GM23248 (cell line): ENCODE measurements at regions of chr13 and their contacts with region 1.

Region 1: DNA sequence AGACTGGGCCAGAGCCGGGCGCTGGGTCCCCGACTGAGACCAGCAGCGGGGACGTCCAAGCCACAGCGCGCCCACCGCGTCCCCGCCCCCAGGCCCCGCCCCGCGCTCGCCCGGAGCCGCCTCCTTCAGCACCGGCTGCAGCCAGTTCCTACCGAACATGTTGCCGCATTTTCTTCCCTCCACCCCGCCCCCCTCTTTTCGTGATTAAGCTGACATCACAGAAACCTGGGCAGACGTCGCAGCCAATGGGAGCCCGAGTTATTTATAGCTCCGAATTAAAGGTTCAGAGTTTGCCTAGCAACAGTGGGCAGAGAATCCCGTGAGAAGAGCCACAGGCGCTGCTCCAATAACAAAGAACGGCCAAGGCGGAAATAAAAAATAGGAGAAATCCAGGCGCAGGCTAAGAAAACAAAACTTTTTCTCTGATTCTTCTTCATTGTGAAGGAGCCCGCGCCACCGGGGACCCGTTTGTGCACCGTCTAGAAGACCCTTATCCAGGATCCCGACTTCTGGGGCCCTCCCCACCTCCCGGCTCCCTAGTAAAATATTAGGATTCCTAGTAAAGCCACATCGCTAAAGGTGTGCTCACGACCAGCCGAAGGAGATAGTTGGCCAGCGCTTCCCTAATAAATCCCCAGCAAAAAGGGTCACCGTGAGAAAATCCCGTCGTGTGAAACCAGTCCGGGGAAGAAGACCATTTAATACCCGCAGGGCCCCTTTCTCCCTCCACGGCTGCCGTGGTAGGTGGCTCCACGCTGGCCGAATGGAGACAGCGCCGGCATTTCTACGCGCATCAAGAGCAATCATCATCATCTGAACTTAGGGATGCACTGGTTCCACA is 61.7 kb downstream of the SERP2 start:
- DNase-seq: peak; percentile 98
- H3K4me3 ChIP-seq: peak overlapping the region; percentile 82
- H3K27ac ChIP-seq: peak overlapping the region; percentile 87
- H3K4me1 ChIP-seq: peaks cover 19% of the 10 kb centered on the region
- H3K27me3 ChIP-seq: no peaks in the 10 kb centered on the region

Region 2: GRCh38 chr13:43905435-43906031 is 529.8 kb before region 1 on chr13:
- in situ Hi-C with region 1: loop called (anchors 10 kb)
- DNase-seq: peak; percentile 81
- H3K4me3 ChIP-seq: no peak overlapping the region
- H3K27ac ChIP-seq: no peak overlapping the region
- H3K4me1 ChIP-seq: peaks cover 8% of the 10 kb centered on the region; the same call in 1 of the 2 replicates
- H3K27me3 ChIP-seq: no peaks in the 10 kb centered on the region

Region 3: GRCh38 chr13:44050450-44051063 is 384.8 kb before region 1 on chr13:
- in situ Hi-C with region 1: loop called (anchors 10 kb)
- DNase-seq: peak; percentile 62
- H3K4me3 ChIP-seq: no peak overlapping the region
- H3K27ac ChIP-seq: no peak overlapping the region
- H3K4me1 ChIP-seq: no peaks in the 10 kb centered on the region
- H3K27me3 ChIP-seq: peaks cover 37% of the 10 kb centered on the region

Region 4: DNA sequence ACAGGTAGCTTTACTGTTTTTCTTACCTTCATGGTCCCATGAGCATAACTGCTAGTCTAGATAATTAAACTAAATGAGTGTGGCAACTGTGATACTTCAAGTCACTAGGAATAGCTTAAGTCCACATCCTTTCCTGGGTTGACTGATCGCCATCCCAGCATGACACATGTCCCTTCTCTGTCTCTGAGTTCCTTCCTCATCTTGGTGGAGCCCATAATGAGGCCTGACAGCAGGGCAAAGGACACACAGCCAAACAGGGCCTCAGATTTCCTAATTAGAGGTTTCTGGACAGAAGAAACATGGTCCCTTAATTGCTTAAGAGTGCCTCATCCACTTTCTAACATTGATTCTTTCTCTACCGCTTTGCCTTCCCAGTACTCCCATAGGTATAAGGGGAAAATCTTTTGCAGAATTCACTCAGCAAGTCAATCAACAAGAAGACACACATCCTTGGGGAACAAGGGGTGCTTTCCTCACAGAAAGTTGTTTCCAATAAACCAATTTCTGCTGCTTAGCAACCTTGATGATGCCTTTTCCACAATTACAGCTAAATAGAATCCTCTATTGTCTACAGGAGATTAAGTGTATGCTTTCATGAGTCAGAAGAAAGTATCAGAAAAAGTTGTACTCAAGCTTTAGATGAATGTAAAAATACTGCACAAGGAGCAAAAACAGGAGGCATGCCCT is 270.0 kb before region 1 on chr13:
- in situ Hi-C with region 1: no loop called
- DNase-seq: no peak
- H3K4me3 ChIP-seq: no peak overlapping the region
- H3K27ac ChIP-seq: no peak overlapping the region
- H3K4me1 ChIP-seq: no peaks in the 10 kb centered on the region
- H3K27me3 ChIP-seq: peaks cover 16% of the 10 kb centered on the region; the same call in 1 of the 2 replicates

Region 5: DNA sequence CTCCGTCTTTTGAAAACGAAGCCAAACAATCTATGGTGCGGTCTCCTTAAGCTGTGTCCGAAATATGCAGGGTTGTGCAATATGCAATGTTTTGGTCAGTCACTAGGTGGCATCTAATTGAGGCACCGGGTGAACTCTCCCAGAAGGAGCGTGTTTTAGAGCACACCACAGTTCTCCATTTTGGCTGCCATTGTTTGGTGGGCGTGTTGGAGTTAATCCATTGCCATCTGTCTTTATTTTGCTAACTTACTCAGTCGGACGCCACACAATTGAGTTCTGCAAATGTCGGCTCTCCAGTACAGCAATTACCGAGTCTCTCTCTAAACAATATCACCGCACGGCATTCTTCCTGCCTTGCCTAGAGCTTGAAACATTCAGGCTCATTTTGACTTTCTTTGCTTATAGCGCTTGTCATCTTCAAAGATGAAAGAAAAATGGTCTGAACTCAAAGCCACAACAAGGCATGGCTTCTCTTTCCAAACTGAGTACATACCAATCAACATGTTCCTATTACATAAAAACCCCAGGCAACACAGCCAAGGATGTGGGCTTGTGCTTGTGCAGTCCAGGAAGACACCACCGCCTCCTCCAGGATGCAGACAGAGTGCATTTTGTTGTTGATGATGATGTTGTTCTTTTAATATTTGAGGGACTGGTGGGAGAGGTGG is 243.7 kb before region 1 on chr13:
- in situ Hi-C with region 1: loop called (anchors 25 kb)
- DNase-seq: peak; percentile 90
- H3K4me3 ChIP-seq: peak overlapping the region; percentile 35
- H3K27ac ChIP-seq: peak overlapping the region; percentile 54
- H3K4me1 ChIP-seq: peaks cover 5% of the 10 kb centered on the region; the same call in 1 of the 2 replicates
- H3K27me3 ChIP-seq: no peaks in the 10 kb centered on the region